Natural killer cell (primary cell): ENCODE measurements at regions of chr16 and their contacts with region 1.

Region 1: GRCh38 chr16:86016201-86016871 is 117.4 kb downstream of the IRF8 start:
- DNase-seq: peak in 1 of 2 donors; percentile 75
- ATAC-seq: peak; percentile 45 to 71 (median 56)
- H3K4me3 ChIP-seq: no peak overlapping the region
- H3K4me3 Mint-ChIP-seq: no peak overlapping the region
- H3K27ac ChIP-seq: no peak overlapping the region
- H3K27ac Mint-ChIP-seq: no peak overlapping the region
- H3K4me1 ChIP-seq: peaks cover 26% of the 10 kb centered on the region
- H3K4me1 Mint-ChIP-seq: peaks cover 0 to 6% of the 10 kb centered on the region in 2 donors
- H3K27me3 ChIP-seq: peaks cover 2% of the 10 kb centered on the region
- H3K27me3 Mint-ChIP-seq: peaks cover 19 to 22% of the 10 kb centered on the region in 2 donors
- CTCF ChIP-seq: peak; percentile 78

Region 2: DNA sequence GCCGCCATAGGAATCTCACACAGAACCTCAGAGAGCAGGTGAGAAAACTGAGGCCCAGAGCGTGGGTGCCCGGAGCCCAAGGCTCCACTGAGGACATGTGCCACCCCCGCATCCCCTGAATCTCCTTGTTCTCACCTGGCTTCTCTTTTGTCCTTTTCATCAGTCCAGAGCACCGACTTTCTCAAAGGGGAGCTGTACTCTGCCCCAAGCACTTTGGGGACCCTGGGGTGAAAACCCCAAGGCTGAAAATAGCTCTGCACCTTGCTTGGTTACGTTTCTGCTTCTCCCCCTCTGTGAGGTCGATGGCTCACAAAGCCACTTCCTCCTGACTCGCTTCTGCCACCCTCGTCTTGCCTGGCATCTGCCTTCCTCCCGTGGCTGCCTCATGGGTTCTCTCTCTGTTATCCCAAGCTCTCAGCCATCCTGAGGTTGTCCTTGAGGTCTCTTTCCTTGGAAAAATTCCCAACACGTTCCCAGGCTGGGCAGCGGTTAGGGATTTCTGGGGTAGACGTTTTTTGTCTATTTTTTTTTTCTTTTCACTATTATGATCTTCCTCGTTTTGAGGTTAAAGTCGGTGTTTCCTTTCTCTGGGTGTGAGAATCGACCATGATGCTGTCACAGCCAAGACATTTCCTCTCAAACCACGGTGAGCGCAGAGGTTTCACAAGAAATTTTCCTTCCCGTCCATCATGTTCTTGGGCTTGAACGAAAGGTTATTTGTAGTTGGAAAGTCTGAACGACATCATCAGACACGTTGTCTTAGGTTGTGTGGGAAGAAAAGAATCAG is 80.2 kb before region 1 on chr16:
- intact Hi-C with region 1: no loop called
- DNase-seq: peak; percentile 79 to 88
- ATAC-seq: peak; percentile 78 to 86 (median 85)
- H3K4me3 ChIP-seq: peak overlapping the region; percentile 41
- H3K4me3 Mint-ChIP-seq: peak overlapping the region; percentile 77
- H3K27ac ChIP-seq: peak overlapping the region; percentile 97
- H3K27ac Mint-ChIP-seq: peak overlapping the region; percentile 92 to 94
- H3K4me1 ChIP-seq: peaks cover 83% of the 10 kb centered on the region
- H3K4me1 Mint-ChIP-seq: peaks cover 63 to 74% of the 10 kb centered on the region in 2 donors
- H3K27me3 ChIP-seq: no peaks in the 10 kb centered on the region
- H3K27me3 Mint-ChIP-seq: no peaks in the 10 kb centered on the region
- CTCF ChIP-seq: no peak

Region 3: DNA sequence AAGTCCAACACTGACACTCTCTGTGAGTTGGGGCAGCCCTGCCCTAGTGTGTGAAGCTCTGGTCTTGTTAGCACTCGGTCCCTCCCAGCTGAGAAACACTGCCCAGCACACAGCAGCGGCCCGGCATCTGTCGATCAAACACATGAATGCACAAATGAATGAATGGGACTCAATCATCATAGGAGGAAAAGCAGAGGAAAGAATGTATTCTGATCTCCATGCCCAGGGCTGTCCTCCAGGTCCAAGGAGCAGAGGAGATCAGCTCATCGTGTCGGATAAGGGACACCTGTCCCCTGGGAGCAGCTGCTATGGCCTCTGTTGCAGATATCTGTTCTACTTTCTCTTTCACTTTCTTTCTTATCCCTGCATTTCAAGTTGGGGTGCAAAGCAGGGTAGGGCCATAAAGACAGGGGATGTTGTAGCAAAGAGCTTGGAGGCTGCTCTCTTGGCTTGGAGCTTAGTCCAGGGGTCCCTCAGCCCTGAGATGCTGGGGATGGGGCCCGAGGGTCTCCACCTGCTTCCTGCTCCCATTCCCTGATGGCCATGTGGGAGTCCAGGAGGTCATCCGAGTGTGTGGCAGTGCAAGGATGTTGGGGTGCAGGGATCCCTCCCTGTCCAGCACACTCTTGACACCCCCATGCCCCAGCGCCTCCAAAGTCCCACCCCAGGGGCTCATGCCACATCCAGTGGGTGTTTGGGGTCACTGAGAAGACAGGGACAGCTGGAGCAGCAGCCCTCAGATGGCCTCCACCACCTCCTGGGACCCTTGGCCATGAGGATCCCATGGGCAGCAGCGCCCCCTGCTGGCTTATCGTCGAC is 29.2 kb before region 1 on chr16:
- intact Hi-C with region 1: loop called (anchors 2 kb)
- DNase-seq: peak; percentile 47 to 64
- ATAC-seq: peak in 2 of 3 donors; percentile 34 to 46
- H3K4me3 ChIP-seq: no peak overlapping the region
- H3K4me3 Mint-ChIP-seq: peak overlapping the region; percentile 61
- H3K27ac ChIP-seq: peak overlapping the region; percentile 10
- H3K27ac Mint-ChIP-seq: peak overlapping the region; percentile 91 to 95
- H3K4me1 ChIP-seq: peaks cover 72% of the 10 kb centered on the region
- H3K4me1 Mint-ChIP-seq: peaks cover 31 to 54% of the 10 kb centered on the region in 2 donors
- H3K27me3 ChIP-seq: no peaks in the 10 kb centered on the region
- H3K27me3 Mint-ChIP-seq: no peaks in the 10 kb centered on the region
- CTCF ChIP-seq: peak; percentile 57